ENCODE measurements at regions of chr2 and their contacts with region 1.

Region 1: DNA sequence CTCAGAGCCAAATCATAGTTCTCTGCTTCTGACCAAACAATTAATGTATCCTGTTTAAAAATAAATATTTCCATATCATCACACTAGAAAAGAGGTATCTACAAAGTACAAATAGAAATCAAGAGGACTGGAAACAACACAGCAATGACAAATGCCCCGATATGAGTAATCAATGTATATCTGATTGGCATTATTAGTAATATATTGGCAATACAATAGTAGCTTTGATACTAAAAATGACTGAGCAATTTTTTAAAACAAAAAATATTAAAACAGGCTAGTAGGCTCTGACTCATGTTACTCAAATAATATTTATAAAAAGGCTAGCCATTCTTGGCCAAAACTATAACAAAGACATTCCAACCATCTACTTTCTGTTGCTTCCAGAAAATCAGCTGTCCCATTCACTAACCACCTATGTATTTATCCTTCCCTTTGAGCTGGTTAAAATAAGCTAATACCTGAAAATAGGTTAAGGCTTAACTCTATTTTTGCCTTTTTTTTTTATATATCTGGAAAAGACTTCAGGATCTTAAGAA is 13.3 kb downstream of the PPP4R3B start:
- DNase-seq: no peak
- H3K4me3 ChIP-seq: no peak overlapping the region
- CTCF ChIP-seq: no peak

Region 2: DNA sequence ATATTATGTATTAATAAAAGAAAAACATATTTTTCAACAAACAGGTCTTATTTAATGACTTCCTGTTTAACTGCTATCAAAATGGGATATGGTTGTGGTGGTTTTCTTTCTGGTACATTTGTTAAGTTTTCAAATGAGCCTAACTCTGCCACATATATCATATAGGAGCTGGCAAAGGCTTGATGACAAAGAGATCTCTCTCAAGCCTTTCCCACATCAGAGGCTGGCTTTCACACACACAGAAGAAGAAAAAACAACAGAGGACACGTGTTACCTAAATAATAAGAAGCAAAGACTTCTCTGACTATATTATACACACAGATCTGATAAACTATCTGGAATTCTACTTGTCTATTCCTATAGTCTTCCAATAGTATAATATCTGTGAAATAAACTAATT is 38.5 kb before region 1 on chr2:
- in situ Hi-C with region 1: loop called (anchors 5 kb)
- DNase-seq: no peak
- H3K4me3 ChIP-seq: no peak overlapping the region
- CTCF ChIP-seq: no peak

Measured in astrocyte of the cerebellum (primary cell).